ENCODE measurements at regions of chr7 and their contacts with region 1.

Region 1: GRCh38 chr7:139767561-139767982 is 10.2 kb downstream of the HIPK2 start:
- DNase-seq: peak; percentile 32
- H3K4me3 Mint-ChIP-seq: peak overlapping the region; percentile 2
- H3K27ac Mint-ChIP-seq: peak overlapping the region; percentile 61
- H3K4me1 Mint-ChIP-seq: peaks cover 61% of the 10 kb centered on the region
- H3K27me3 Mint-ChIP-seq: no peaks in the 10 kb centered on the region

Region 2: GRCh38 chr7:139731802-139732470 is 35.6 kb before region 1 on chr7:
- intact Hi-C with region 1: loop called (anchors 2 kb)
- DNase-seq: no peak
- H3K4me3 Mint-ChIP-seq: peak overlapping the region; percentile 24
- H3K27ac Mint-ChIP-seq: peak overlapping the region; percentile 9
- H3K4me1 Mint-ChIP-seq: peaks cover 64% of the 10 kb centered on the region
- H3K27me3 Mint-ChIP-seq: peaks cover 1% of the 10 kb centered on the region

Measured in activated T-helper 1 cell treated with anti-CD3 and anti-CD28 coated beads, Interleukin-12 subunit alpha, Interleukin-12 subunit beta, Interleukin-2, Interleukin-4 antibody, amounts not matched to agents 30 ng/mL and 10 ng/mL and 1 ng/mL, durations not matched to agents 14 hours and 24 hours and 36 hours (primary cell).